Motor neuron (in vitro differentiated cells): ENCODE measurements at regions of chr13 and their contacts with region 1.

Region 1: GRCh38 chr13:51435002-51435578 is 17.7 kb downstream of the INTS6 start:
- ATAC-seq: peak in 1 of 8 experiments; percentile 17
- H3K4me3 ChIP-seq: no peak overlapping the region
- H3K27ac ChIP-seq: no peak overlapping the region
- H3K4me1 ChIP-seq: no peaks in the 10 kb centered on the region

Region 2: GRCh38 chr13:51134763-51135365 is 300.2 kb before region 1 on chr13:
- in situ Hi-C with region 1: no loop called
- ATAC-seq: no peak
- H3K4me3 ChIP-seq: no peak overlapping the region
- H3K27ac ChIP-seq: no peak overlapping the region
- H3K4me1 ChIP-seq: no peaks in the 10 kb centered on the region

Region 3: GRCh38 chr13:51262501-51263211 is 172.4 kb before region 1 on chr13:
- in situ Hi-C with region 1: no loop called
- ATAC-seq: peak in 4 of 8 experiments; percentile 18 to 49 (median 32)
- H3K4me3 ChIP-seq: no peak overlapping the region
- H3K27ac ChIP-seq: no peak overlapping the region
- H3K4me1 ChIP-seq: peaks cover 2 to 11% of the 10 kb centered on the region in 2 donors

Region 4: GRCh38 chr13:51764184-51765141 is 329.4 kb after region 1 on chr13:
- in situ Hi-C with region 1: loop called in 1 of 9 experiments (anchors 25 kb)
- ATAC-seq: peak; percentile 85 to 94 (median 91)
- H3K4me3 ChIP-seq: no peak overlapping the region
- H3K27ac ChIP-seq: no peak overlapping the region
- H3K4me1 ChIP-seq: peaks cover 0 to 6% of the 10 kb centered on the region in 2 donors

Region 5: GRCh38 chr13:51797664-51798488 is 362.8 kb after region 1 on chr13:
- in situ Hi-C with region 1: loop called in 2 of 9 experiments (anchors 25 kb)
- ATAC-seq: peak; percentile 21 to 82 (median 71)
- H3K4me3 ChIP-seq: no peak overlapping the region
- H3K27ac ChIP-seq: no peak overlapping the region
- H3K4me1 ChIP-seq: peaks cover 33 to 37% of the 10 kb centered on the region in 2 donors

Region 6: GRCh38 chr13:51988988-51989618 is 554.0 kb after region 1 on chr13:
- in situ Hi-C with region 1: no loop called
- ATAC-seq: no peak
- H3K4me3 ChIP-seq: no peak overlapping the region
- H3K27ac ChIP-seq: no peak overlapping the region
- H3K4me1 ChIP-seq: no peaks in the 10 kb centered on the region